ENCODE measurements at regions of chr18 and their contacts with region 1.

Region 1: DNA sequence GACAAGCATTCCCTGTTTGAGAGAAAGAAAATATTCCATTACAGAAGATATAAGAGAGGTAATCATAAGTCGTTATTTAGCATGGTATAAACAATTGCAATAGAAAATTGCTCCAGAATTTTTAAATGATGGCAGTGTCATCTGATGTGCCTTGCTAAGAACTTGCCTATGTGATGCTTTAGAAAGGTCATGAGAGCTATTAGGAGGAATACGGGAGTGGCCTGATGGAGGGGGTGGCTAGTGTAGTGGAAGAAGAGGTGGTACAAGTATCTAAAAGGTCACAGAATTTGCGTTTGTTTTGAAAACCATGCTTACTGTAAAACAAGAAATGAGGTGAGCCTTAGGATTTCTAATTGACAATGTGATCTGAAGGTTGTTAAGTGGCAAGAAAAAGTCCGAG is 550.0 kb downstream of the TMX3 start:
- DNase-seq: no peak
- H3K4me3 Mint-ChIP-seq: no peak overlapping the region
- H3K27ac Mint-ChIP-seq: no peak overlapping the region
- H3K4me1 Mint-ChIP-seq: no peaks in the 10 kb centered on the region
- H3K27me3 Mint-ChIP-seq: no peaks in the 10 kb centered on the region
- CTCF ChIP-seq: no peak

Region 2: GRCh38 chr18:68244786-68245185 is 79.9 kb after region 1 on chr18:
- CTCF ChIA-PET with region 1: interaction called, 10 read pairs
- intact Hi-C with region 1: no loop called
- DNase-seq: no peak
- H3K4me3 Mint-ChIP-seq: no peak overlapping the region
- H3K27ac Mint-ChIP-seq: no peak overlapping the region
- H3K4me1 Mint-ChIP-seq: no peaks in the 10 kb centered on the region
- H3K27me3 Mint-ChIP-seq: no peaks in the 10 kb centered on the region
- CTCF ChIP-seq: no peak

Measured in Calu3 (cell line).